ENCODE measurements at regions of chr1 and their contacts with region 1.

Region 1: GRCh38 chr1:27275696-27276095 is 41.3 kb downstream of the WDTC1 start:
- DNase-seq: no peak

Region 2: GRCh38 chr1:26410706-26411623 is 864.7 kb before region 1 on chr1 and contains the start of gene LIN28A:
- intact Hi-C with region 1: loop called in 1 of 2 experiments (anchors 5 kb)
- DNase-seq: no peak
- total RNA-seq, gene LIN28A: not detected

Measured in posterior vena cava (tissue), 2 donors.